Motor neuron (in vitro differentiated cells): ENCODE measurements at regions of chr15 and their contacts with region 1.

Region 1: DNA sequence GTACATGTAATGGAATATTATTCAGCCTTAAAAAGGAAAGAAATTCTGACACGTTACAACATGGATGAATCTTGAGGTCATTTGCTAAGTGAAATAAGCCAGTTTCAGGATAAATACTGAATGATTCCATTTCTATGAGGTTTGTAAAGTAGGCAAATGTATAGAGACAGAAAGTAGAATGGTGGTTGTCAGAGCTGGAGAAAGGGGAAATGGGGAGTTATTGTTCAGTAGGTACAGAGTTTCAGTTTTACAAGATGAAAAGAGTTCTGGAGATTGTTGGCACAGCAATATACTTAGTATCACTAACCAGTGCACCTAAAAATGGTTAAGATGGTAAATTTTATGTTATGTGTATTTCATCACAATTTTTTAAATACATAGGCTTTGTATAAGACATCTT is 60.6 kb downstream of the USP8 start:
- ATAC-seq: no peak
- H3K4me3 ChIP-seq: no peak overlapping the region
- H3K27ac ChIP-seq: no peak overlapping the region
- H3K4me1 ChIP-seq: no peaks in the 10 kb centered on the region

Region 2: DNA sequence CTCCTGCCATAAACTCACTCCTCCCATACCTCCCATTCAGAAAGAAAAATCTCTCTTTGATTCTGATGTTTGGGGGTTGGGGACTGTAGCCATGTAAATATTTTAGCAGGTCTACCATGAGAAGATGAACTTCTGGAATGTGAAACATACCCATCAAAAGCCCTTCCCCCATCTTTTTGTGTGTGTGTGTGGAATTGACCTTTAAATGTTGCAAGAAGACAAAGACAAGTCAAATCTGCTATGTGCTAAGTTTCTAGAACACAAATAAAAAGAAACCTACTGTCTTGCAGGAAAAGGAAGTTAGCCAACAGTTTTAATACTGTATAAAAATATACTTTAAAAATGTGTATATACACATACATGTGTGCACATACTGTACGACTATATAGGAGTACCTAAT is 91.4 kb after region 1 on chr15:
- in situ Hi-C with region 1: loop called in 1 of 9 experiments (anchors 25 kb)
- ATAC-seq: no peak
- H3K4me3 ChIP-seq: no peak overlapping the region
- H3K27ac ChIP-seq: no peak overlapping the region
- H3K4me1 ChIP-seq: no peaks in the 10 kb centered on the region